ENCODE measurements at regions of chr1 and their contacts with region 1.

Region 1: DNA sequence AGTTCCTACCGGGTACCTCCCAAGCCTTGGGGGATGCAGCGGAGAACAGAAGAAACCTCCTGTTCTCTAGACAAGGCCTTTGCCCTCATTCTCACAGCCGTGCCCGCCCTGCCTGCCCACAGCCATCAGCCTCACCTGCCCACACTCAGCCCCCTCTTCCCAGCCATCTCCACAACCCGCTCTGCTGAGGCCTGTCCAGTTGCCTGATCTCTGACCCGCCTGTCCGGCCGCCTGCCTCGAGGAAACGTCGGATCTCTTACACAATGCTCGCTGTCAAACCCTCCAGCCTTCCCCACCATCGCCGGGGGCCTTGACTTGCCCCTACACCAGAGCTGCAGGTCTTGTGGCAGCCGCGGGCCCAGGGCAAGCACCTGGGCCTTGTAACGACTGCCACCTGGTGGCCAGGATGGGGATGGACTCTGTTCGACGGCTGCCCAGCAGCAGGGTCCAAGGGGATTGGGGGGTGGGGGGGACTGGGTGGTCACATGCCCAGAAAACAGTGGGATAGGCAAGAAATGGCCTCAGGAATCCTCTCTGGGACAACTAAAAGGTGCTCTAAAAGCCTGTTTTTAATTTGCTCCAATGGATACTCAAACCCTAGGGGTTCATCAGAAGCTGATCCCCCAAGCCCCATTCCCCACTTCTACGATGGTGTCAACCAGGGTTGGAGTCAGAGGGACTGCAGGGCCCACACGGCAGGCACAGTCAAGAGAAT is 31.0 kb downstream of the SLC45A1 start:
- DNase-seq: peak; percentile 85
- ATAC-seq: peak; percentile 50

Region 2: GRCh38 chr1:7975212-7975865 is 373.6 kb before region 1 on chr1:
- intact Hi-C with region 1: loop called (anchors 2 kb)
- DNase-seq: no peak
- ATAC-seq: peak; percentile 97

Region 3: DNA sequence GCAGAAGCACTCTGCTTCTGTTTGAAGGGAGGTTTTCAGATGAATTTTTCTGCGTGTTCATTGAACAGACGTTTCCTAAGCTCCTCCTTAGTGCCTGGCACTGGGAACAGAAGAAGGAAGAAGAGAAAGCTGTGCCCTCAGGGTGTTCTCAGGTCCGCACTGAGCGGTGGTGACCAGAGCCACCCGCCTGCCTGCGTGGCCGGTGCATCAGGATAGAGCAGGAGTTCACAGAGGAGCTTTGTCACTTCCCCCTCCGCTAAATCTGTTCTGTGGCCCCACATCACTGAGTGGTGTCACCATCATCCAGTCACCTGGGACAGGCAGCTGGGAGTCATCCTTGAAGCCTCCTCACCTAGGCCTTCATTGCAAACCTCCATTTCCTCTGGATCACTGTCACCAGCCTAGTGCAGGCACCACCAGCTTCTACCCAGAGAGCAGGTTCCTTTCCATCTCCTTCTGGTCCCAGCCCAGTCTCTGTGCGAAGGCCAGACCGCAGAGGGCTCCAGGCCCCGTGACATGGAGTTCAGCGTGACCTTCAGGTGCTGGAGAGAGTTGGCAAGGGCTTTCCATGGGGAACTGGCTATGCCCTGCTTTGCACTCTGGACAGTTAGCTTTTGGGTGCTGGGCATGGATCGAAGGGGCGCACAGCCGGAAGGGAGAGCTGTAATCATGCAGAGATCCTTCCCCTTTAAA is 365.7 kb before region 1 on chr1:
- intact Hi-C with region 1: loop called (anchors 2 kb)
- DNase-seq: no peak
- ATAC-seq: peak; percentile 62

Region 4: DNA sequence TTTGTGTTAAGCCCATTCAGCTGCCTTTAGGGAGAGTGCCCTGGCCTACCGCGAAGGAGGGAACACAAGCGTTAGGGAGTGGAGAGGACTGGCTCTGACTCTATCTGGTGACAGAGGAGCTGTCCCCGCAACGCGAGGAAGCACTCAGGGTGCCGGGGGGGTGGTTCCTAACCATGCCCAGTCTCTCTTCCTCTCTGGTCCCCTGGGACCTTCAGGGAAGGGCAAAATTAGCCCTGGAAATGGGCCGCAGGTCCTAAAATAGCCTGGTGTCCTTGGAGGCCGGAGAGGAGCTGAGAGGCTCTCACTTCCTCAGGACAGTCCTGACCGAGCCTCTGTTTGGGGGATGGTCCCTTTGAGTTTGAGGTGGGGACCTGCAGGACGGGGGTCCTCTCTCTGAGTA is 25.2 kb before region 1 on chr1:
- intact Hi-C with region 1: loop called (anchors 2 kb)
- DNase-seq: no peak
- ATAC-seq: peak; percentile 90

Region 5: GRCh38 chr1:8604041-8604945 is 255.4 kb after region 1 on chr1:
- intact Hi-C with region 1: no loop called
- DNase-seq: no peak
- ATAC-seq: no peak

Measured in Right ventricle myocardium inferior (tissue), 1 donor.